ENCODE measurements at regions of chr1 and their contacts with region 1.

Region 1: DNA sequence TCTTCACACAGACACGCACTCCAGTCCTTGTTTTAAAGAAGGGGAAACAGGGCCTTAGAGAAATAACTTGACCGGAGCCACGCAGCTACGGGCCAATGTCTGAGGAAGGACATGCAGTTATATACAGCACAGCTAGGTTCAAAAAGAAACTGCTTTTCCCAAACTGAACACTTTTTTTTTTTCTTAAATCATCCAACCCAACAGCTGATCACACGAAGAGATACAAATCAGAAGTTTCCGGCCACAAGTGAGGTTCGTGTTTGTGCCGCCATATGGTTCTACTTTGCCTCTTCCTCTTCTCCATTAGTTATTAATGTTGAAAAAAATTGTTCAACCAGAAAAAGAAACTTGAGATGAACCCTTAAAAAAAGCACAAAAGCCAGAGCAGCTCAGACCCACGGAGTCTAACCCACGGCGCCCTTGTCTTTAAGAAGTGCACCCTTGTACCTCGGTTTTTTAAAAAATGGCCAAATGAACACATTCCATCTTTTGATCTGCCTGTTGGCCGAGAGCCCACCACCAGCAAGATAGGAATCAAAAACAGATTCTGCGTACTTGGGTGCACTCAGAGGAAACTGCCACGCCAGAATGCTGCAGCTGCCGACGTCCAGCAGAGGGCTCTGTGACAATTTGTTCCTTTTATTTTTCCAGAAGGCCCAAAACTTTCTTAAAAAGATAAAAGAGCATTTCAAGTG is 78.9 kb downstream of the SLC66A1 start:
- DNase-seq: peak; percentile 31 to 91 (median 62)
- ATAC-seq: peak; percentile 76
- H3K4me3 ChIP-seq: peak overlapping the region; percentile 51
- H3K4me3 Mint-ChIP-seq: peak overlapping the region; percentile 92
- H3K27ac ChIP-seq: peak overlapping the region; percentile 46 to 62
- H3K27ac Mint-ChIP-seq: peak overlapping the region; percentile 94
- H3K4me1 ChIP-seq: peaks cover 92% of the 10 kb centered on the region
- H3K4me1 Mint-ChIP-seq: peaks cover 86% of the 10 kb centered on the region
- H3K27me3 ChIP-seq: no peaks in the 10 kb centered on the region
- H3K27me3 Mint-ChIP-seq: no peaks in the 10 kb centered on the region
- CTCF ChIP-seq: peak; percentile 90

Region 2: DNA sequence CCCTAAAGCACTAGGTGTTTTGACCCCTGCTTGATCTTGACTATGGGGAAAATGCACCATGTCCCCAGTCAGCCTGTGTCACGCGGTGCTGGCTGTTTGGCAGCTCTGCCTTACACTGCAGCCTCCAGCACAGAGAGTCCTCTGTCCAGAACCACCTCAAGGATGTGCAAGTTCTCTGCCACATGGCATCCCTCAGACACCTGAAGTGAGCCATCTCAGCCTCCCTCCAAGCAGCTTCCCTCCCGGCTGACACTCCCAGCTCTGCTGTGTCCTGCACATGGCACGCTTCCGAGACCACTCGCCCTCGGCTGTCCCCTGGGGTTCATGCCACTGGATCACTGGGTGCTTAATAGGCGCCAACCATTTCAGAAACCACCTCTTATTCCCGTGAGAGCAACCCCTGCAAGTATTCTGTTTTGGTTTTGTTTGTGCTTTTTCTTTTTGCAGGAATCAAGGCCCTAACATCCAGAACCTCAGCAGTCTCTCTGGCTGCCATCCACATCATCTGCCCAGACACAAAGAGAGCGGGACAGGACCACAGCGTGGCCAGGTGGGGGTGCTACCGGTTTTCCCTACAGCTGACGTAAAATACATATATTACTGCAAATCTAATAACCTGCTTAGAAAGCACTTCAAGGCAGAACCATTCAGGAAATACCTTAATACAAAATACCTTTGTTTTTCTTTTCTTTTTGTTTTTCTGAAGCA is 48.6 kb after region 1 on chr1:
- CTCF ChIA-PET with region 1: no interaction called
- POLR2A ChIA-PET with region 1: interaction called, 4 read pairs
- intact Hi-C with region 1: loop called in 1 of 2 experiments (anchors 5 kb)
- DNase-seq: peak; percentile 21 to 71 (median 47)
- ATAC-seq: peak; percentile 72
- H3K4me3 ChIP-seq: no peak overlapping the region
- H3K4me3 Mint-ChIP-seq: peak overlapping the region; percentile 52
- H3K27ac ChIP-seq: peak overlapping the region in 1 of 2 donors; percentile 26
- H3K27ac Mint-ChIP-seq: peak overlapping the region; percentile 76
- H3K4me1 ChIP-seq: peaks cover 87% of the 10 kb centered on the region
- H3K4me1 Mint-ChIP-seq: peaks cover 94% of the 10 kb centered on the region
- H3K27me3 ChIP-seq: no peaks in the 10 kb centered on the region
- H3K27me3 Mint-ChIP-seq: no peaks in the 10 kb centered on the region
- CTCF ChIP-seq: peak; percentile 54

Region 3: DNA sequence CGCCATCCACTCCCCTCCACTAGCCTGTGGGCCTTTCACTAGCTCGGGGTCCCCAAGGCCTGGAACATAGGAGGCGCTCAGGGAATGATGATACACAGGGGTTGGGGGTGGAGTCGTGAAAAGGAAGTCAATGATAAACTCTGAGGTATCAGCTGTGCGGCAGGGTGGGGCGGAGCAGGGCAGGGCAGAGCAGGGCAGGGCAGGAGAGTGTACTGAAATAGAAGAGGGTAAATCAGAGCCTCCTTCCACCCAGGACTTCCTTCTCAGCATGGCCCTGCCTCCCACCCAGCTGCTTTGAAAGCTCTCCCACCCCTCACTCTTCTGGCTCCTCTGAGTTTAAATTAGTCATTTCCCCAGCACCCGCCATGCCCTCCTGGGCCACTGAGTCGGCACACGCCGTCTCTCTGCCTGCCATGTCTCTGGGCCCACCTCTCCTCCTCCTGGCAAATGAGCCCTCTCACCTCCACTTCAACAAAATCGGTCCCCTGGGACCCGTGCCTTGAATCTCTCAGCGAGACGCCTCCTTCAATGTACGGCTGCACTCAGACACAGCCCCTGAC is 77.4 kb after region 1 on chr1:
- CTCF ChIA-PET with region 1: interaction called, 6 read pairs
- POLR2A ChIA-PET with region 1: interaction called, 15 read pairs
- intact Hi-C with region 1: loop called (anchors 2 to 5 kb)
- DNase-seq: peak; percentile 48 to 89 (median 74)
- ATAC-seq: peak; percentile 87
- H3K4me3 ChIP-seq: peak overlapping the region; percentile 15
- H3K4me3 Mint-ChIP-seq: peak overlapping the region; percentile 42
- H3K27ac ChIP-seq: peak overlapping the region; percentile 73 to 74
- H3K27ac Mint-ChIP-seq: peak overlapping the region; percentile 86
- H3K4me1 ChIP-seq: peaks cover 100% of the 10 kb centered on the region
- H3K4me1 Mint-ChIP-seq: peaks cover 93% of the 10 kb centered on the region
- H3K27me3 ChIP-seq: no peaks in the 10 kb centered on the region
- H3K27me3 Mint-ChIP-seq: no peaks in the 10 kb centered on the region
- CTCF ChIP-seq: no peak

Measured in CD4-positive, alpha-beta T cell (primary cell).